Activated CD4-positive, alpha-beta memory T cell treated with anti-CD3 and anti-CD28 coated beads for 36 hours (primary cell): ENCODE measurements at regions of chr3 and their contacts with region 1.

Region 1: DNA sequence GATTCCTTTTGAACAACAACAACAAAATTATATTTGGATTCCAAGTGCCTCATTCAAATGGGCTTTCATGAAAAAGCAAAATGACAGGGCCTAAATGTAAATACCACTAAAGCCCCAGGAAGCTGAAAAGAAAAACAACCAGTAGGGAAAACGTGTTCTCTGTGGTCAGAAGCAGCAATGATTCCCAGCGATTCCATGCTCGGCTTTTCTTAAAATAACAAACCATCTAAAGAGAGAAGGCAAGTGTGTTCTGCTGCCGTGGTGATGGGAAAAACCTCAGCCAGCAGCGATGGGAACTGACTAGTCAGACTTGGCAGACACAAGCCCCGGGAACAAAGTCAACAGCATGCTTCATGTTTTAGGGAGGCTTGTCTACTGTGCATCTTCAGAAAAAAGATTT is 153.6 kb downstream of the TNIK start:
- DNase-seq: no peak
- H3K4me3 Mint-ChIP-seq: no peak overlapping the region
- H3K27ac Mint-ChIP-seq: no peak overlapping the region
- H3K4me1 Mint-ChIP-seq: peaks cover 53% of the 10 kb centered on the region
- H3K27me3 Mint-ChIP-seq: no peaks in the 10 kb centered on the region

Region 2: DNA sequence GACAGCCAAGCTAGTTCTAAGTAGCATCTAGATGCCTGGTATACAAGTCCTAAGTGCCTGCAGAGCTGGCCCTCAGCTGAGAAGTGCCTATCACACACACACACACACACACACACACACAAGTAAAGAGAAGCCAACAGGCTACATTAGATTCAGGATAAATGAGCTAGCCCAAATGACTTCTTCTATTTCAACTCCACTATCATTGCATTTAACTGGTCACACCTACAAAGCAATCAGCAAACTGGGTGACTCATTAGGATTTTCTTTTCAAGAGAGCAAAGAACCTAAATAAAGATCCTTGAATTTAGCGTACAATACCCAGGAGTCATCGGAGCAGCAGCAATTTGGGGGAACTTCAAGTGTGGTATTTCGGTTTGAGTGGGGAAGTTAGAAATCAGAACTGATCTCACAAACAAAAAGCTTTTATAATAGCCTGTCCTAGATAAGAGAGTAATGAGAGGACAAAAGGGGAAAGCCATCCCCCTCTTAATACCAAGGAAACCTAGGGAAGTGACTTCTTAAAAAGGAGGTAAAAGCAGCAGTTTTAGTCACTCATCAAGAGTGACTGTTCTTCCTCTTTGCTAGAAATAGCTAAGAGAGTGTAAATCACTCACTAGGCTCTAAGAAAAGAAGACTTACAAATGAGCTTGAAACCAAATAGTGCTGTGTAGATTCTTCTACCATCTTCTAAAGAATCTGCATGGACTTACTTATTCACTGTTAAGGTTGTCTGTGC is 40.8 kb after region 1 on chr3:
- CTCF ChIA-PET with region 1: no interaction called
- POLR2A ChIA-PET with region 1: no interaction called
- intact Hi-C with region 1: loop called (anchors 5 kb)
- DNase-seq: no peak
- H3K4me3 Mint-ChIP-seq: no peak overlapping the region
- H3K27ac Mint-ChIP-seq: peak overlapping the region; percentile 70
- H3K4me1 Mint-ChIP-seq: peaks cover 66% of the 10 kb centered on the region
- H3K27me3 Mint-ChIP-seq: no peaks in the 10 kb centered on the region